Gastrocnemius medialis (tissue), 4 donors: ENCODE measurements at regions of chr12 and their contacts with region 1.

Region 1: GRCh38 chr12:39319187-39319586 is 123.7 kb downstream of the KIF21A start:
- DNase-seq: no peak
- ATAC-seq: no peak
- H3K4me3 ChIP-seq: no peak overlapping the region
- H3K27ac ChIP-seq: no peak overlapping the region
- H3K4me1 ChIP-seq: no peaks in the 10 kb centered on the region
- H3K27me3 ChIP-seq: no peaks in the 10 kb centered on the region
- CTCF ChIP-seq: no peak
- POLR2A ChIP-seq: no peak

Region 2: DNA sequence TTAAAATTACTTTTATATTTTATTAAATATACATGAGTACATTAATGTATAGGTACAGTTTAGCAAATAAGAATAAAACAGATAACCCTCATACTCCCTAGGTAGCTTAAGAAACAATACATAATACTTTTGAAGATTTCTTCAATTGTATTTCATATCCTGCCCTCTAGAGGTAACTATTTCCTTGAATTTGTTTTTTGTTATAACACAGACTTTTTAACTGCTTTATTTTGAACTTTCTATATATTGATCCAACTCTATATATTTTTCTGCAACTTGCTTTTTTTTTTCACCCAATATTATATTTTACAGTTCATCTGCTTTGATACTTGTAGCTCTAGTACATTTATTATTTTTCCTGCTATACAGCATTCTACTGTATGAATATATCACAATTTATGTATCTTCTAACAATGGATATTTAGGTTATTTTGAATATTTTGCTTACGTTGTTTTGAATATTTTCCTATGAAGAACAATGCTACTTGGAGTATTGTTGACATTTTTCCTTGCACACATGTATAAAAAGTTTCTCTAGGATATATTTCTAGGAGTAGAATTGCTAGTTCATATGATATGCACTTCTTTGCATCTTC is 373.2 kb after region 1 on chr12:
- in situ Hi-C with region 1: loop called in 1 of 4 experiments (anchors 5 kb)
- intact Hi-C with region 1: no loop called
- DNase-seq: no peak
- ATAC-seq: no peak
- H3K4me3 ChIP-seq: no peak overlapping the region
- H3K27ac ChIP-seq: no peak overlapping the region
- H3K4me1 ChIP-seq: no peaks in the 10 kb centered on the region
- H3K27me3 ChIP-seq: no peaks in the 10 kb centered on the region
- CTCF ChIP-seq: peak in 2 of 5 experiments; percentile 17 to 35
- POLR2A ChIP-seq: no peak

Region 3: DNA sequence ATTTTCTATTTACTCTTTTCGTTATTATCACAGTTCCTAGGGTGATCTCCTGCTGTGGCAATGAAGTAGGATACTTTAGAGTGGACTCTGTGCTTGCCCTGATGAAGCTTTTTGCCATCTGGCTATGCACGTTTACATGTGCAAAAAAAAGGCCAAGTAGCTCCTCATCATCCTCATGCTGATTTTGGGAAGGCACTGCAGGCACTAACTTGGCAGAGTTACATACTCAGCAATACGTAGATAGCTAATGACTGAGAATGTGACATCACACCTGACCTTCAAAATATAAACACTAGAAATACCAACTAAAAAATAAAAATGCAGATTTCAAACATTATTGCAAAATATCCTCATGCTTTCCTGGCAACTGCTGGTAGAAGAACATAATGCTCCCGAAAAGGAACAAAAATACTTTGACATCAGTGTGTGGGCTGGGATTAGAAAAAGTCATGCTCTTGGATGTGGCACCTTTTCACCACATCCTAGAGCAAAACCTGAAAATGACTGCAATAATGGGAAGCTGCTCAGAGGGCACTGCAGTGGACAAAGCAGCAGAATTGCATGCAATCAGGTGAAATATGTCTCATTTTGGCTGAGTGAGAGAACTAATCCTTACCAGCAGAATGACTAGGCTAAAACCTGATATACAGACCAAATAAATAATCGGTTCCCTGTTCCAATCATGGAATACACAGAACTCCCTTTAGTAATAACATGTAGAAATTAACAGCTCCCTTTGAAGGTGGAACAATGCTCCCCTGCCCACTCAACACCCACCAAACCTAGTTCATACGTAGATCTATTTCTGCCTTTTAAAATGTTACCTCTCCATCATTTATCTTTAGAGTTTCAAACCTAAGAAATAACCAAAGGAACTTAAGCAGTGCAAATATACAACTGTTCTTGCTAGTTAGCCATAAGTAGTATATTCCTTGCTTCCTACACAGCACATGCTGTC is 453.8 kb after region 1 on chr12:
- in situ Hi-C with region 1: no loop called
- intact Hi-C with region 1: no loop called
- DNase-seq: no peak
- ATAC-seq: peak; percentile 41 to 56
- H3K4me3 ChIP-seq: no peak overlapping the region
- H3K27ac ChIP-seq: no peak overlapping the region
- H3K4me1 ChIP-seq: no peaks in the 10 kb centered on the region
- H3K27me3 ChIP-seq: no peaks in the 10 kb centered on the region
- CTCF ChIP-seq: no peak
- POLR2A ChIP-seq: no peak